ENCODE measurements at regions of chr2 and their contacts with region 1.

Region 1: GRCh38 chr2:61176755-61177726 is 15.1 kb downstream of the C2orf74 start:
- DNase-seq: peak; percentile 99
- H3K4me3 Mint-ChIP-seq: peak overlapping the region; percentile 90
- H3K27ac Mint-ChIP-seq: peak overlapping the region; percentile 82
- H3K4me1 Mint-ChIP-seq: peaks cover 50% of the 10 kb centered on the region
- H3K27me3 Mint-ChIP-seq: peaks cover 9% of the 10 kb centered on the region

Region 2: GRCh38 chr2:60641811-60642788 is 534.9 kb before region 1 on chr2:
- intact Hi-C with region 1: no loop called
- DNase-seq: peak; percentile 67
- H3K4me3 Mint-ChIP-seq: no peak overlapping the region
- H3K27ac Mint-ChIP-seq: no peak overlapping the region
- H3K4me1 Mint-ChIP-seq: no peaks in the 10 kb centered on the region
- H3K27me3 Mint-ChIP-seq: no peaks in the 10 kb centered on the region

Region 3: DNA sequence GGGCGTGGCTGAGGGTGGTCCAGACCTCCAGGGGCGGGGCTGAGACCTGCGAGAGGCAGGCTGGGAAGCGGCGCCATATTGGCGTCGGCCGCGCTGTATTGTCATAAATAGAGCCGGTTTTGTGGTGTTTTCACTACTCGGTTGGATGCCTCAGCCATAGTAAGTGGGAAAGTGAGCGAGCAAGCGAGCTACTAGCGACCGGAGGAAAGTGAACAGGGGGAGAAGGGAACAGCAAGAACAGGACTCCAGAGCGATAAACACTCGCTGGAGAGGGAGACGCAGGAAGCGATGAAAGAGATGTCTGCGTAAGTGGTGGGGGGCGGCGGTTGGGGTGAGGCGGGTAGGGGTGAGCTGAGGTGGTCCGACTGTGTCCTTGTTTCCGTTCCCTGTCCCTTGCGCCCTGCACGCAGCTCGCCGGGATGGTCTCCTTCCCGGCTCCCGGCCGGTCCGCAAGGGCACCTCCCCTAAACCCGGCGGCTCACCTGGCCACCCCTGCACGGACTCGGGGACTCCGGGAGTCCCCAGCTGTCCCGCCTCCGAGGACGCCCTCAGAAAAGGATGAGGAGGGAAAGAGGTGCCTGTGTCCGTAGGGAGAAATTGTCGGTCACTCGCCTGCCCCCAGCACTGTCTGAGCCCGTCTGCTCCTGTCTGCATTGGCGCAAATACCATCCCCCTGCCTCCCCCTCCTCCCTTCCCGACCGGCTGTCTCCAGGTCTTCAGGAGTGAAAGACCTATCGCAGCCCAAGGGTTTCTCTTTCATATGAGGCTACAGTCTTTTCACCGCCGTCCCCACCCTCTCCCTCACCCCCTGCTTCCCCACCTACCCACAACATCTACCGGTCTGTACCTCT is 420.6 kb before region 1 on chr2 and contains the start of gene PAPOLG:
- intact Hi-C with region 1: loop called (anchors 2 kb)
- DNase-seq: peak; percentile 99
- H3K4me3 Mint-ChIP-seq: peak within 1 kb of the TSS; percentile 97
- H3K27ac Mint-ChIP-seq: peak within 1 kb of the TSS; percentile 99
- H3K4me1 Mint-ChIP-seq: peaks cover 29% of the 10 kb centered on the region
- H3K27me3 Mint-ChIP-seq: no peaks in the 10 kb centered on the region
- total RNA-seq, gene PAPOLG: 18.1 and 21.6 TPM in 2 replicates

Region 4: DNA sequence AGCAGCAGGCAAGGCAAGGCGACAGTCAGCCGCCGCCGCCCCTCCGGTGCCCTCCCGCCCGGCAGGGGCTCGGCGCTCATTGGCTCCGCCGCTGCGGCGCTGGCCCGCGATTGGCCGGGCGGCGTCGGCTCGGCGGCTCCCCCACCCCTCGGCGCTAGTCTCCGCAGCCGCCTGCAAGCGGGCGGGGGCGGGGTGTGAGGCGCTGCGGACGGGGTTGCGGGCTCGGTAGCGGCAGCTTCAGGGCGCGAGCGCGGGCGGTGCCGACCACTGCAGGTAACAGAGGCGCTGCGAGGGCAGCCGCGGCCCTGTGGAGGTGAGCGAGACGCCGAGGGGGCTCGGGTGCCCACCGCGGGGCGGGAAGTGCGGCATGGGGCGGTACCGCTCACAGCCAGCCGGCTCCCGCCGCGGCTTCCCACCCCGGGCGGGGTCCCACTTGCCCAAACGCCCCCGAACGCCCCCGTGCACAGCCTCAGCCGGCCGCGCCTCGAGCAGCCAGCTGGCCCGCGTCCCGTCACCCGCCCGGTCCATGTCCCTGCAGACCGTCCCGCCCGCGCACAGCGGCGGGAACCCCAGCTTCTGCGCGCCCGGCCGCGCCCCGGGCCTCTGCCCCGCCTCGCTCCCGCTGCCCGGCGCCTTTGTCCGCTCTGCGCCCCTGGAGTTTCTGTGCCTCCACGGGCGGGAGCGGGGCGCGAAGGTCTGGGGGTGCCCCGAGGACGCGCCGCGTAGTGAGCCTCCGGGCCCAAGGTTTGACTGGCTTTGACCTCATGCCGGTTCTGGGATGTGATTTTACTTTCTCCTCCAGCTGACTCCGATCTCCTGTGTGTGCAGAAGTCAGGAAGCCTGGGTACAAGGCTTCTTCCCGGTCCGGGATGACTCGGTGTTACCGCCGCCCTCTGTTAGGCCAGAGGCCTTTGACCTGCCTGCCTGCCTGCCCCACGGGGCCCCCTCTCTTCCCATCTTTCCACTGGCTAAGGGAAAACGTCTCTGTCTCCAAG is 111.0 kb before region 1 on chr2 and contains the start of gene SANBR:
- intact Hi-C with region 1: loop called (anchors 1 kb)
- DNase-seq: peak; percentile 97
- H3K4me3 Mint-ChIP-seq: peak within 1 kb of the TSS; percentile 84
- H3K27ac Mint-ChIP-seq: peak within 1 kb of the TSS; percentile 80
- H3K4me1 Mint-ChIP-seq: peaks cover 8% of the 10 kb centered on the region
- H3K27me3 Mint-ChIP-seq: peaks cover 1% of the 10 kb centered on the region
- total RNA-seq, gene SANBR: 3.1 and 3.4 TPM in 2 replicates

Region 5: GRCh38 chr2:61144697-61145268 is 32.3 kb before region 1 on chr2:
- intact Hi-C with region 1: loop called (anchors 1 kb)
- DNase-seq: peak; percentile 98
- H3K4me3 Mint-ChIP-seq: peak overlapping the region; percentile 88
- H3K27ac Mint-ChIP-seq: peak overlapping the region; percentile 88
- H3K4me1 Mint-ChIP-seq: peaks cover 6% of the 10 kb centered on the region
- H3K27me3 Mint-ChIP-seq: peaks cover 2% of the 10 kb centered on the region

Region 6: GRCh38 chr2:61470965-61471904 is 294.2 kb after region 1 on chr2 and contains the start of gene USP34:
- intact Hi-C with region 1: loop called (anchors 1 kb)
- DNase-seq: peak; percentile 96
- H3K4me3 Mint-ChIP-seq: peak within 1 kb of the TSS; percentile 98
- H3K27ac Mint-ChIP-seq: peak within 1 kb of the TSS; percentile 98
- H3K4me1 Mint-ChIP-seq: peaks cover 19% of the 10 kb centered on the region
- H3K27me3 Mint-ChIP-seq: no peaks in the 10 kb centered on the region
- total RNA-seq, gene USP34: 84.3 and 93.8 TPM in 2 replicates